Dendritic cell treated with granulocyte-macrophage colony-stimulating factor and Interleukin-4, amounts not matched to agents 40 ng/mL and 50 ng/mL, for 4 days (primary cell): ENCODE measurements at regions of chr13 and their contacts with region 1.

Region 1: DNA sequence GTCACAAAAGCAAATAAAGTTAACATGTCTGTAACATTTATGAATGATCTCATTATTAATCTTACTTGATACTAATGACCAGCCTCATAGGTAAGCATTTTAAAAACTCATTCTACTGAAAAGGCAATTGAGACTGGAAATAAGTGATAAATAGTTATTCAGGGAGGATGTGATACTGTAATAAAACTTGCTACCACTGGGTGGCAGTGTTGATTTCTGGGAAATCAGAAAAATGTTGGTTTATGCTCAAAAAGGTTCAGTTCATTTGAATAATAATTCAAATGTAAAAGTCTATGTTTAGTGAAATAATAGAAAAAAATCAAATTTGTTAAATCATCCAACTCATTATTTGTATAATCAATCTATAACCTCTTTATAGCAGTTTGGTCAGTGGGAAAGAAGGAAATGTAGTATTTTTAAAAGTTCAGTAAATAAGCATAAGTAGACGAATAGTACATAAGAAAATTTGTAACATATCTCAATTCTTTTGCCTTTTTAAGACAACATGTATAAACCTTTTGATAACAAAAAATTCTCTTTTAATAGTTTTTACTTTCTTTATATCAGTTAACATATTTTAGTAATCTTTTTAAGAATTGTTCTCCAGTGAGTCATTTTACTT is 9.6 kb downstream of the ABHD13 start:
- H3K4me3 Mint-ChIP-seq: no peak overlapping the region
- H3K27ac Mint-ChIP-seq: no peak overlapping the region
- H3K4me1 Mint-ChIP-seq: peaks cover 10% of the 10 kb centered on the region
- H3K27me3 Mint-ChIP-seq: no peaks in the 10 kb centered on the region

Region 2: GRCh38 chr13:108322206-108322824 is 94.6 kb after region 1 on chr13:
- intact Hi-C with region 1: loop called (anchors 5 kb)
- H3K4me3 Mint-ChIP-seq: no peak overlapping the region
- H3K27ac Mint-ChIP-seq: no peak overlapping the region
- H3K4me1 Mint-ChIP-seq: peaks cover 32% of the 10 kb centered on the region
- H3K27me3 Mint-ChIP-seq: no peaks in the 10 kb centered on the region